ENCODE measurements at regions of chr7 and their contacts with region 1.

Region 1: GRCh38 chr7:136399385-136399784 is 422.2 kb upstream of the MTPN start:
- DNase-seq: peak; percentile 69
- H3K4me3 ChIP-seq: no peak overlapping the region
- H3K27ac ChIP-seq: peak overlapping the region; percentile 65
- H3K4me1 ChIP-seq: peaks cover 61% of the 10 kb centered on the region
- H3K27me3 ChIP-seq: no peaks in the 10 kb centered on the region
- CTCF ChIP-seq: no peak

Region 2: DNA sequence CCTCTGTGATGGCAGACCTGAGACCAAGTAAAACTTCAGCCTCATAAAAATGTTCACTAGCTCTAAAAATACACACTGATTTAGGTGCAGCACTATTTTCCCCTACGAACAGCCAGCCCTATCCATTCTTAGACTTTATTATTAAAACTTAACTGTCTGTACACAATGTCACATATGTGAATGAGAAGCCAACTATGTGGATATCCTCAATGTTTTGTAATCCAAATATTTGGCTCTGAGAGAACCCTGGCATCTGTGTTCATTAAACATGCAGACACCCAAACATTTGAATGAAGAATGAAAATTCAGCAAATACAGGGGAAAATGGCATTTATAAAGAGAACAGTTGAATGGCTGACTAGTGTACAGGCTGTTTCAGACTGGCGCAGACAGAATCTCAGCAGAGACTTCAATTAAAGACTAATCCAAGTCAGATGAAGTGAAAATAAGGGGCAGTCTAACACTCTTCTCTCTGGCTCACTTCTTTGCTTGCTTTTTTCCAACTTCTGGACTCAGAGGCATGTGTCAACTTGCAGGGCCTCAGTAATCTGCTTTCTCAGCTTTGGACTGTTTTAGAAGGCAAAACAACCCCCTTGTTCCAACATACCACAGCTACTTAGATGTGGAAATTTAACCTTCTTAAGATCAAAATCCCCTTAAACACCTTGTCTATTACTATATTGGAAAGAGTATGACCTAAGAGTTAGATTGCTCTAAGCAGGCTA is 603.4 kb before region 1 on chr7:
- CTCF ChIA-PET with region 1: no interaction called
- POLR2A ChIA-PET with region 1: no interaction called
- intact Hi-C with region 1: loop called (anchors 5 kb)
- DNase-seq: no peak
- H3K4me3 ChIP-seq: no peak overlapping the region
- H3K27ac ChIP-seq: no peak overlapping the region
- H3K4me1 ChIP-seq: peaks cover 6% of the 10 kb centered on the region
- H3K27me3 ChIP-seq: no peaks in the 10 kb centered on the region
- CTCF ChIP-seq: no peak

Region 3: GRCh38 chr7:136150311-136150710 is 249.1 kb before region 1 on chr7:
- CTCF ChIA-PET with region 1: no interaction called
- POLR2A ChIA-PET with region 1: no interaction called
- intact Hi-C with region 1: no loop called
- DNase-seq: no peak
- H3K4me3 ChIP-seq: no peak overlapping the region
- H3K27ac ChIP-seq: no peak overlapping the region
- H3K4me1 ChIP-seq: no peaks in the 10 kb centered on the region
- H3K27me3 ChIP-seq: no peaks in the 10 kb centered on the region
- CTCF ChIP-seq: no peak

Region 4: DNA sequence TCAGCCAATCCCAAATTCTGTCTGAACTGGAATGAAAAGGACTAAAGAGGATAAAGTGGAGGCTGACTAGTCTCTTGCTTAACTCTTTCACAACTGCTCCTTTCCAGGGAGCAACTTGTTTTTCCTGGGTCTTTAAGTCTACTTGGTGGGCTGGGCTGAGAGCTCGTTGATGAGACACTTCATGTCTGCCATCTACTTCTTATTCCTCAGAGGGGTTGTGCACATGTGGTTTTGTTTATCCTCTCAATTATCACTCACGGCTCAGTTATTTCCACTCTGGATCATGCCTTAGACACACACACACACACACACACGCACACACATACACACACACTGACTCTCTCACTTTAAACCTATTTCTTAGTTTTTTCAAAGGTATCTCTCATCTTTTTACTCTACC is 123.6 kb before region 1 on chr7:
- CTCF ChIA-PET with region 1: no interaction called
- POLR2A ChIA-PET with region 1: interaction called, 24 read pairs
- intact Hi-C with region 1: loop called (anchors 2 kb)
- DNase-seq: peak; percentile 77
- H3K4me3 ChIP-seq: no peak overlapping the region
- H3K27ac ChIP-seq: peak overlapping the region; percentile 58
- H3K4me1 ChIP-seq: peaks cover 29% of the 10 kb centered on the region
- H3K27me3 ChIP-seq: no peaks in the 10 kb centered on the region
- CTCF ChIP-seq: no peak

Region 5: GRCh38 chr7:136900005-136900404 is 500.6 kb after region 1 on chr7:
- CTCF ChIA-PET with region 1: no interaction called
- POLR2A ChIA-PET with region 1: no interaction called
- intact Hi-C with region 1: no loop called
- DNase-seq: no peak
- H3K4me3 ChIP-seq: no peak overlapping the region
- H3K27ac ChIP-seq: no peak overlapping the region
- H3K4me1 ChIP-seq: no peaks in the 10 kb centered on the region
- H3K27me3 ChIP-seq: no peaks in the 10 kb centered on the region
- CTCF ChIP-seq: no peak

Region 6: GRCh38 chr7:137001041-137001440 is 601.7 kb after region 1 on chr7:
- CTCF ChIA-PET with region 1: no interaction called
- POLR2A ChIA-PET with region 1: no interaction called
- intact Hi-C with region 1: loop called (anchors 5 kb)
- DNase-seq: peak; percentile 47
- H3K4me3 ChIP-seq: no peak overlapping the region
- H3K27ac ChIP-seq: no peak overlapping the region
- H3K4me1 ChIP-seq: peaks cover 7% of the 10 kb centered on the region
- H3K27me3 ChIP-seq: no peaks in the 10 kb centered on the region
- CTCF ChIP-seq: no peak

Measured in A673 (cell line).